Activated CD8-positive, alpha-beta T cell treated with anti-CD3 and anti-CD28 coated beads for 36 hours (primary cell): ENCODE measurements at regions of chr7 and their contacts with region 1.

Region 1: DNA sequence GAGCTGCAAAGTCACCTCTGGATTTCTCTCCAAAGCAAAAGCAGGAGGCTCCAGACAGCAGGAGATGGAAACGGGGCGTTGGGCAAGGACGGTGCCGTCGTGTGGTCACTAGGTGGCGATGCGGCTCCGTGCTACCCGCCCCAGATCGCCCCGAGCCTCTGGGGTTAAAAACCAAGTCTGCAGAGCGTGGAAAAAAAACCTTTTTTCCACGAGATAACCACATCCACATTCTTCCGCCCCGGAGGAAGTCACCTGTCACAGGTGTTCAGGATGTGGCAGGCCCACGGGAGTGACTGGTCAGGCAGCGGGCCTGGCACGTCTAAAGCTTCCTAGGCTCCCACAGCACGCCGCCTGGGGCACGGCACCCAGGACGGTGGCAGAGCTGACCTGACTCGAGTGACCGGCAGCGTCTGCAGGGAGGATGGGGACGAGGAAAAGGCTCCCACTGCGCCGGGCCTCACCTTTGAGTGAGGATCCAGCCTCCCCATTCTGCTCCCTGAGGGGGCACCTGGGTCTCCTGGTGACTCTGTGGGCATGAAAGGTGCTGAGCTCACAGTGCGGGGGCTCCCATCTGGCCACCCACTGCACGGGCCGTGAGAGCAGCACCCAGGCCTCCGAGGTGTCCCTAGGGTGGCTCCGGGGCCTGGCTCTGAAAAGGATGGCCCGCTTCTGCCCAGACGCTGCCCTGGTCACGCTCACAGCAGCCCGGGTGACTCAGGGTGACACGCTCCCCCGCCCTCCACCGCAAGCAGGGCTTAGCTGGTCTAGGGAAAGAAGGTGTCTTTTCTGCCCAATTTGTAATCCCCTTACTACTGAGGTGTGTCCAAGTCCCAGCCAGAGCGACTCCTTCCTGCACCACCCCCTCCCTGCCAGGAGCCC is 71.3 kb upstream of the TNRC18 start:
- DNase-seq: peak; percentile 84
- ATAC-seq: peak; percentile 87
- H3K4me3 Mint-ChIP-seq: no peak overlapping the region
- H3K27ac Mint-ChIP-seq: no peak overlapping the region
- H3K4me1 Mint-ChIP-seq: peaks cover 26% of the 10 kb centered on the region
- H3K27me3 Mint-ChIP-seq: no peaks in the 10 kb centered on the region
- CTCF ChIP-seq: peak; percentile 95

Region 2: DNA sequence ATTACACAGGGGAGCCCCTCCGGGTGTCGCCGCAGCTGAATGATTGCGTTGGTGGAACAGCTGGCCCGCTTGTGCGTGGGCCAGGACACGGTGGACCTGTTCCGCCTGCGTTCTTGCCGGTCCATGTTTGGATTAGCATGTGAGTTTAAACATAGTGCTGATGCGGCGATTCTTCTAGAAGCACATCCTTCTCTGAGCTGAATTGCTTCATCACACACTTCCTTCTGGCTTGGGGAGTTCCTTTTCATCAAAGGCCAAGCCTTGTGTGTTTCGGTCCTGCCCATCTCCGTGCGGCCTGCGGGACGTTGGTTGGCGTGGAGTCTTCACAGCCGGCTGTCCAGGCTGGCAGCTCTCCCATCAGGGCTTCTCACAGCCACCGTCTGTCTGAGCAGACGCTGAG is 257.6 kb before region 1 on chr7:
- CTCF ChIA-PET with region 1: interaction called, 11 read pairs
- POLR2A ChIA-PET with region 1: no interaction called
- intact Hi-C with region 1: no loop called
- DNase-seq: no peak
- ATAC-seq: no peak
- H3K4me3 Mint-ChIP-seq: no peak overlapping the region
- H3K27ac Mint-ChIP-seq: no peak overlapping the region
- H3K4me1 Mint-ChIP-seq: peaks cover 37% of the 10 kb centered on the region
- H3K27me3 Mint-ChIP-seq: peaks cover 23% of the 10 kb centered on the region
- CTCF ChIP-seq: no peak

Region 3: GRCh38 chr7:5302577-5302976 is 192.3 kb before region 1 on chr7:
- CTCF ChIA-PET with region 1: no interaction called
- POLR2A ChIA-PET with region 1: no interaction called
- intact Hi-C with region 1: no loop called
- DNase-seq: no peak
- ATAC-seq: no peak
- H3K4me3 Mint-ChIP-seq: no peak overlapping the region
- H3K27ac Mint-ChIP-seq: no peak overlapping the region
- H3K4me1 Mint-ChIP-seq: peaks cover under 1% of the 10 kb centered on the region
- H3K27me3 Mint-ChIP-seq: peaks cover 6% of the 10 kb centered on the region
- CTCF ChIP-seq: no peak

Region 4: DNA sequence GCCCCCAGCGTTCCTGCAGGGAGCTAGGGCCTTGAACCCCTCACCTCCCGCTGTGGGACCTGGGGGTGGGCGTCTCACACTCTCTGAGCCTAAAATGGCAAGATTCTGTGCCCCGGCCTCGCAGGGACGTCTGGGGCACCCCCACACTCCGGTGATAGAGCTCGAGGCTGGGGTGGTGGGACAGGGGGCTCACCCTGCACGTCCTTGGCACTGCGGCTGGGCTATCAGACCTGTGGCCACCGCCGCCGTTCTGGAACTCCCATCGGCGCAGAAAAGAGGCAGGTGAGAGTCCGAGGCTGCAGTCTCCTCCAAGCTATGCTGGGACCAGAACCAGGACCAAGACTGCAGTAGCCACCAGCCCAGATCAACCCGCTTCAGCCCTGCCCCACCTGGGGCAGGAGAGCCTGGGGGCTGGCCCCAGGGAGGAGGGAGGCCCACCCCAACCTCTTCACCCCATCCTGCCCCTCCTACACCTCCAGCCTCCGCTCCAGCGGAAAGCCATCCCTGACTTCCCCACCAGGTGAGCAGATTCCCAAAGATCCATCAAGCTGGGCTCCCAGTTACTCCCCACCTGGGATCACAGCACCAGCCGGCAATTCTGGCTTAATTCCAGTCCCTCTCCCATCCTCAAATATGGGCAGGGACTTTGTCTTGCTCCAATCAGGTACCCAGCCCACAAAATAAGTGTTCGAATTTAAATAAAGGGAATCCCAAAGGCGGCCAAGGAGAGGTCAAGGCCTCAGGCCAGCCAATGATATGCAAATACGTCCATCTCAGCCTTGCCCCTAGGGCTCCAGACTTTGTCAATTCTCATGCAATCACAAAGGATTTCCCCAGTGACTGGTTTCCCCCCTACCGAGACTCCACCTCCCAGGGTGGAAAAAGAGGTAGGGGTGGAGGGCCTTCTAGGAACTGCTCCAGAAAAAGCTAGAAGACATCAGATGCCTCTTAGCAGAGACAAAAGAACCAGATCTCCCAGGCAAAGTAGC is 87.7 kb before region 1 on chr7:
- CTCF ChIA-PET with region 1: no interaction called
- POLR2A ChIA-PET with region 1: no interaction called
- intact Hi-C with region 1: no loop called
- DNase-seq: no peak
- ATAC-seq: no peak
- H3K4me3 Mint-ChIP-seq: no peak overlapping the region
- H3K27ac Mint-ChIP-seq: no peak overlapping the region
- H3K4me1 Mint-ChIP-seq: no peaks in the 10 kb centered on the region
- H3K27me3 Mint-ChIP-seq: peaks cover 3% of the 10 kb centered on the region
- CTCF ChIP-seq: no peak

Region 5: DNA sequence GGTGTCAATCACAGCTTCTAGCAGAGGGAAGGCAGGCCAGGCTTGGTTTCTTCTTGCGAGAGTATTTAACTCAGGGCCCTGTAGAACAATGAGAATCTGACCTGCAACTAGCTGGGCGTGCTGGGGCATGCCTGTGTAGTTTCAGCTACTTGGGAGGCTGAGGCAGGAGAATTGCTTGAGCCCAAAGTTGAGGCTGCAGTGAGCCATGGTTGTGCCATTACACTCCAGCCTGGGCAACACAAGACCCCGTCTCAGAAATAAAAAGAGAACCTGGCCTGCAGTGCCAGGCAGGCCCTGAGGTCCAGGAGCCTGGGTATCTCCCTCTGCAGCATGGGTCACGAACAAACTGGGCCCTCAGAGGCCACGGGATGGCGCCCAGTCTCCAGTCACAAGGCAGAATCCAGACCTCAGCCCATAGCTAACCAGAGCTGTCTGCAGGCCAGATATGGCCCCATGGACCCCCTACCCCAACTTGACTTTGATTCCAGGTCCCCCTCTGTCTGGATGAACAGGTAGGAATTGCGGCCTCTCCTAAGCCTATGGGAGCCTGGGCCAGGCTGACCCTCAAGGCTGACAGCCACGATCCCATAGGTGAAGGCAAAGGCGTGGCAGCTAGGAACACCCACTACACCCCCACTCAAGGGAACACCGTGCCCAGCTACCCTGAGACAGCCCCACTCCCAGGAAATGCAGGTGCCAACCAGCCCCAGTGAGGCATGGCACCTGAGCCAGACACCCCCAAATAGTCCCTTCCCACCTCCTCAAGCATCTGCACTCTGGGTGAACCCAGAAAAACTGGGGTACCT is 31.4 kb after region 1 on chr7:
- CTCF ChIA-PET with region 1: interaction called, 12 read pairs
- POLR2A ChIA-PET with region 1: interaction called, 10 read pairs
- intact Hi-C with region 1: no loop called
- DNase-seq: peak; percentile 62
- ATAC-seq: peak; percentile 2
- H3K4me3 Mint-ChIP-seq: peak overlapping the region; percentile 96
- H3K27ac Mint-ChIP-seq: peak overlapping the region; percentile 96
- H3K4me1 Mint-ChIP-seq: peaks cover 26% of the 10 kb centered on the region
- H3K27me3 Mint-ChIP-seq: no peaks in the 10 kb centered on the region
- CTCF ChIP-seq: no peak

Region 6: DNA sequence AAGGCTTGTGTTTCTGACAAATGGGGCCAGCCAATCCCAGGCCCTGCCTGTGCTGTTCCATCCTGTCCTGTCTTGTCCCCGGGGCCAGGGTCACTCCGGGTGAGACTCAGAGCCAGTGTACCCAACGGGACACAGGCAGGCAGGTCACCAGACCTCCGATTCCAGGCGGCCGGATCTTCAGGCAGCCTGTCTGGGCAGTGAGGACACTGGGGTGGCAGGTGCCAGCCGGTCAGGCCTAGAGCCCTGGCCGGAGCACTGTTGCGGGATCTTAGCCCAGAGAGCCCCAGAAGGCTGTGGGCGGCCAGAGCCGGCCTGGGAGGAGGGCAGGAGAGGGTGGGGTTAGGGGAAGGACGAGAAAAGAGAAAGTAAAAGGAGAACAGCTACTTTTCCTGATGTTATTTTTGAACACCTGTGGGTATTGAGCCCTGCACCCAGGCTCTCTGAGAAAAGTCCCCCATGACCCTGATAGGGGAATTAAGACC is 63.0 kb after region 1 on chr7:
- CTCF ChIA-PET with region 1: interaction called, 7 read pairs
- POLR2A ChIA-PET with region 1: interaction called, 16 read pairs
- intact Hi-C with region 1: no loop called
- DNase-seq: peak; percentile 33
- ATAC-seq: no peak
- H3K4me3 Mint-ChIP-seq: peak overlapping the region; percentile 66
- H3K27ac Mint-ChIP-seq: peak overlapping the region; percentile 86
- H3K4me1 Mint-ChIP-seq: peaks cover 44% of the 10 kb centered on the region
- H3K27me3 Mint-ChIP-seq: no peaks in the 10 kb centered on the region
- CTCF ChIP-seq: no peak

Region 7: GRCh38 chr7:5677538-5678294 is 182.8 kb after region 1 on chr7:
- CTCF ChIA-PET with region 1: interaction called, 26 read pairs
- POLR2A ChIA-PET with region 1: no interaction called
- intact Hi-C with region 1: no loop called
- DNase-seq: peak; percentile 70
- ATAC-seq: peak; percentile 52
- H3K4me3 Mint-ChIP-seq: no peak overlapping the region
- H3K27ac Mint-ChIP-seq: peak overlapping the region; percentile 53
- H3K4me1 Mint-ChIP-seq: peaks cover 55% of the 10 kb centered on the region
- H3K27me3 Mint-ChIP-seq: no peaks in the 10 kb centered on the region
- CTCF ChIP-seq: peak; percentile 47

Region 8: GRCh38 chr7:5704534-5704922 is 209.6 kb after region 1 on chr7:
- CTCF ChIA-PET with region 1: interaction called, 40 read pairs
- POLR2A ChIA-PET with region 1: interaction called, 4 read pairs
- intact Hi-C with region 1: no loop called
- DNase-seq: peak; percentile 87
- ATAC-seq: no peak
- H3K4me3 Mint-ChIP-seq: no peak overlapping the region
- H3K27ac Mint-ChIP-seq: no peak overlapping the region
- H3K4me1 Mint-ChIP-seq: peaks cover 80% of the 10 kb centered on the region
- H3K27me3 Mint-ChIP-seq: no peaks in the 10 kb centered on the region
- CTCF ChIP-seq: peak; percentile 85